Motor neuron (in vitro differentiated cells): ENCODE measurements at regions of chr11 and their contacts with region 1.

Region 1: DNA sequence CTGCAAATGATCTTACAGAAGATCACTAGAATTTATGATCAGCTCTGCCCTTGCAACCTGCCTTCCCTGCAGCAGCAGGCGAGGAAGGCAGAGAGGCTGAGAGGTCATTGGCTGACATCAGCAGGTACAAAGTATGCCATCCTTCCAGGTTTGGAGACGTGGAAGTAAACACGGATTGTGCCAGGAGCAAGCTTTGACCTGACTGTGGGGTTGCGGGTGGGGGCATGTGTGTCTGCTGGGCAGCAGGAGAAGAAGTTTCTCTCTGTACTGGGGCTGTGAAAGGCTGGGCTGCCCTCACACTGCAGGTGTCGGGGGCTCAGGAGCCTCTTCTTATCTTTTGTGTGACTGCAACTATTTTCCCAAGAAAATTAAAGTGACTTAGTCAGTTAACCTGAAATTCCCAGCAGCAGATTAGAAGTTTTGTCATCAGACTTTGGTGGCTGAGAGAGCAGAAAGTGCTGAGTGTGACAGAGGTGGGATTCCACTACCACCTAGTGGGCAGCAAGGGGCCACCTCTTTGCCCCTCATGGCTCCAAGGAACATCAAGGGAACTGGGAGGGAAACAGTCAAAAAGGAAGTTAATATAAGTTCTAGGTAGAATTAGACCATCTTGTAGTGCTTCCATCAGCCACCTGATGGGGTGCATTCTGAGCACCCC is 565.9 kb downstream of the ETS1 start:
- ATAC-seq: peak in 4 of 8 experiments; percentile 52 to 88 (median 62)
- H3K4me3 ChIP-seq: no peak overlapping the region
- H3K27ac ChIP-seq: no peak overlapping the region
- H3K4me1 ChIP-seq: peaks cover 4 to 6% of the 10 kb centered on the region in 2 donors

Region 2: GRCh38 chr11:127003260-127003981 is 1018.1 kb before region 1 on chr11:
- in situ Hi-C with region 1: loop called in 1 of 9 experiments (anchors 25 kb)
- ATAC-seq: peak; percentile 62 to 91 (median 90)
- H3K4me3 ChIP-seq: peak overlapping the region; percentile 23 to 38 (median 32)
- H3K27ac ChIP-seq: no peak overlapping the region
- H3K4me1 ChIP-seq: peaks cover 30 to 32% of the 10 kb centered on the region in 2 donors

Region 3: DNA sequence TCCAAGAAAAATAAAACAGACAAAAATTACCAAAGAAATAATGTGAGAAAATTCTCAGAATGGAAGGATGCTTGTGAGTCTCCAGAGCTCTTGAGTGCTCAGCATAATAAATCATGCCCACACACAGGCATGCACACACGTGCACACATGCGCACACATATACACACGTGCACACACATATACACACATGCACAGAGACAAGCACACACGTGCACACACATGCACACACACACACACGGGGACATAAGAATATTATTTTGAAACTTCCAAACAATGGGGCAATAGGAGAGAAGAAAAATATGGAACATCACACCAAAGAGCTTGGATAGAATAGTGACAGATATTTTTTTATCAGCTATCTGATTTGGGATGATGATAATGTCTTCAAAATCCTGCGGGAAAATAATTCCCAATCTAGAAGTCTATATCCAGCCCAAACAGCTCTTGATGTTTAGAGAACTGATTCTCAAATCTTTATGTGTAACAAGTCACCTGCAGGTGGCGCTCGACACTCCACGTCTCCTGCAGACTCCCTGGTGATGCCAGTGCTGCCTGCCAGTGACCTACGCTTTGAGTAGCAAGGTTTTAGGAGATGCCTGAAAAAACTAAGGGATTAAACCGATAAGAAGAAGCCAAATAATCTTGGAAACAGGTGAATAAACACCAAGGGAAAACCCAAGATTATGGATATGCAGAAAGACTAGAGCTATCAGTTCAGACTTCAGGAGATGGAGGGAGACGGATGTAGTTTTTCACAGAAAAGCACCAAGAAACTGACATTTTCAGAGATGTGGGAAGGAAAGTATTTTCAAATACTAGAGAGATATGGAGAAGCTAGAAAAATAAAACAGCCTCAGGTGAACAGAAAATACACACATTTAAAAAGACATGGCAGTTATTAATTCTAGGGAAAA is 177.7 kb before region 1 on chr11:
- in situ Hi-C with region 1: loop called in 1 of 9 experiments (anchors 25 kb)
- ATAC-seq: peak in 7 of 8 experiments; percentile 38 to 88 (median 74)
- H3K4me3 ChIP-seq: no peak overlapping the region
- H3K27ac ChIP-seq: no peak overlapping the region
- H3K4me1 ChIP-seq: peaks cover 0 to 8% of the 10 kb centered on the region in 2 donors

Region 4: GRCh38 chr11:127925475-127925874 is 96.0 kb before region 1 on chr11:
- in situ Hi-C with region 1: no loop called
- ATAC-seq: peak in 1 of 8 experiments; percentile 49
- H3K4me3 ChIP-seq: no peak overlapping the region
- H3K27ac ChIP-seq: no peak overlapping the region
- H3K4me1 ChIP-seq: no peaks in the 10 kb centered on the region

Region 5: GRCh38 chr11:128262463-128263345 is 241.2 kb after region 1 on chr11:
- in situ Hi-C with region 1: no loop called
- ATAC-seq: no peak
- H3K4me3 ChIP-seq: no peak overlapping the region
- H3K27ac ChIP-seq: no peak overlapping the region
- H3K4me1 ChIP-seq: no peaks in the 10 kb centered on the region